Activated CD4-positive, alpha-beta T cell treated with anti-CD3 and anti-CD28 coated beads, Interleukin-2, amount 10 ng/mL, durations not matched to agents 7 days and 5 days (primary cell): ENCODE measurements at regions of chr1 and their contacts with region 1.

Region 1: GRCh38 chr1:155001675-155002463 is 733 bp upstream of the ZBTB7B start:
- DNase-seq: peak; percentile 99
- H3K4me3 Mint-ChIP-seq: peak overlapping the region; percentile 93
- H3K27ac Mint-ChIP-seq: peak overlapping the region; percentile 96
- H3K4me1 Mint-ChIP-seq: peaks cover 60% of the 10 kb centered on the region
- H3K27me3 Mint-ChIP-seq: no peaks in the 10 kb centered on the region

Region 2: DNA sequence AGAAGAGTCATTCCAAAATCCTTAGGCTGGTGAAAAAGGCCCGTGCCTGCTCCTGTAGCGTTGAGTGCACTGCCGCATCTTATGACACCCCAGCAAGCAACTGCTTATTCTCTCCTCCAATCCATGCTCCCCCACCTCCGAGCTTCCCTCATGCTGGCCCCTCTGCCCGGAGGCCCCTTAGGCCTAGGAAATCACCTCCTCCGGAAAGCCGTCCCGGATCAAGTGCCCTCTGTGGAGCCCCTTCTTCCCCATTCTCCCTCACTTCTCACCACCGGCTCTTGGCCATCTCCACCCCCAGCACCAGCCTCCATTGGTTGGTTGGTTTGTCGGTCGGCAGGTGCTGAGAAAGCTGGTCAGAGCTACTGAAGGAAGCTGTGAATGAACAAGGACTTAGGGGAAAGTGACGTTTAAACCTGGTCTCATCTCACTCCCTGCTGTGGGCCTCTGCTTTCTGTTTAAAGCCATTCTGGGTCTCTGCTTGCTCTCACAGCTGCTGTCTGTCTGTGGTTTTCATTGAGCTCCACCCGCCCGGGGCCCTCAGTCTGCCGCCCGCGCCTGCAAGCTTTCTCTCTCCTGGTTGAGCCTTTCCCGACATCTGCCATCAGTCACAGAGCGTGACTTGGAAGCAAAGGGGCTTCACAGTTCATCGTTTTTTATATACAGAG is 254.0 kb before region 1 on chr1:
- CTCF ChIA-PET with region 1: no interaction called
- POLR2A ChIA-PET with region 1: no interaction called
- DNase-seq: peak; percentile 76
- H3K4me3 Mint-ChIP-seq: peak overlapping the region; percentile 76
- H3K27ac Mint-ChIP-seq: peak overlapping the region; percentile 95
- H3K4me1 Mint-ChIP-seq: peaks cover 80% of the 10 kb centered on the region
- H3K27me3 Mint-ChIP-seq: peaks cover 6% of the 10 kb centered on the region

Region 3: GRCh38 chr1:154955718-154956543 is 45.9 kb before region 1 on chr1 and contains the start of gene PBXIP1:
- CTCF ChIA-PET with region 1: interaction called, 11 read pairs
- POLR2A ChIA-PET with region 1: interaction called, 5 read pairs
- DNase-seq: peak; percentile 91
- H3K4me3 Mint-ChIP-seq: peak within 1 kb of the TSS; percentile 96
- H3K27ac Mint-ChIP-seq: peak within 1 kb of the TSS; percentile 96
- H3K4me1 Mint-ChIP-seq: peaks cover 86% of the 10 kb centered on the region
- H3K27me3 Mint-ChIP-seq: no peaks in the 10 kb centered on the region
- total RNA-seq, gene PBXIP1: 74.6 to 92.0 TPM

Region 4: GRCh38 chr1:154974063-154974807 is 27.6 kb before region 1 on chr1 and contains the start of gene CKS1B:
- CTCF ChIA-PET with region 1: interaction called, 10 read pairs
- POLR2A ChIA-PET with region 1: no interaction called
- DNase-seq: peak; percentile 98
- H3K4me3 Mint-ChIP-seq: no peak within 1 kb of the TSS
- H3K27ac Mint-ChIP-seq: no peak within 1 kb of the TSS
- H3K4me1 Mint-ChIP-seq: peaks cover 40% of the 10 kb centered on the region
- H3K27me3 Mint-ChIP-seq: no peaks in the 10 kb centered on the region
- total RNA-seq, gene CKS1B: 147 to 157 TPM

Region 5: DNA sequence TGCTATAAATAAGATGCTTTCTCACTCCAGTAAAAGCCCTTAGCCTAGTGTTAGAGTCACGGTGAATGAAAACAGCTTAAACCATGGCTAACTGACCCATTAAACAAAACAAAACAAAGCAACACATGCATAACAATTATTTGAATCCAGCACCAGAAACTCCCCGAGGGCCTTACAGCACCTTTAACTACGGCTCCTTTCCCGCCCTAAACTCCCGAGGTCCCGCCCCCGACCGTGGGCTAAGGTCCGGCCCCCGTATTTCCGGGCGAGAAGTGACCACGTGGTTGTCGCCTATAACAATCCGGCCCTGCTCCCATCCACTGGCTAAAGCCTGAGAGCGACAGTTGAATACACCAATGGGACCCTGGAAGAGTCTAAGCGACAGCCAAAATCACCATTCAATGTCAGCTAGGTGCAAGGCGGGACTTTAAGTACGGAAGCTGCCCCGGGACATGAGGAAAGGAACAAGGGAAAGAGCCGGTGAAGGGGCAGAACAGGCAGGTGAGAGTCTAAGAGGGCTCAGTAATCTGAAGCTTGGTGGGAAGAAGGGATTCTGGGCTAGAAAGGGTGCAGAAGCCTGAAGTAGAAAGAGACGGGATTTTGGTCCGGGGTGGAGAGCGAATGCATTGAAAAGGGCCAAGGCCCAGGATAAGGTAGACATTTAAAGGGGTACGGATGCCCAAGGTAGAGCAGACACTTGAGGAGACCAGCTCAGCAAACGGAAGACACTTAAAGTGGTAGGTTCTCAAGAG is 18.8 kb before region 1 on chr1 and contains the start of gene FLAD1:
- CTCF ChIA-PET with region 1: interaction called, 29 read pairs
- POLR2A ChIA-PET with region 1: interaction called, 7 read pairs
- DNase-seq: peak; percentile 98
- H3K4me3 Mint-ChIP-seq: no peak within 1 kb of the TSS
- H3K27ac Mint-ChIP-seq: no peak within 1 kb of the TSS
- H3K4me1 Mint-ChIP-seq: peaks cover 33% of the 10 kb centered on the region
- H3K27me3 Mint-ChIP-seq: no peaks in the 10 kb centered on the region
- total RNA-seq, gene FLAD1: 41.2 to 41.3 TPM

Region 6: DNA sequence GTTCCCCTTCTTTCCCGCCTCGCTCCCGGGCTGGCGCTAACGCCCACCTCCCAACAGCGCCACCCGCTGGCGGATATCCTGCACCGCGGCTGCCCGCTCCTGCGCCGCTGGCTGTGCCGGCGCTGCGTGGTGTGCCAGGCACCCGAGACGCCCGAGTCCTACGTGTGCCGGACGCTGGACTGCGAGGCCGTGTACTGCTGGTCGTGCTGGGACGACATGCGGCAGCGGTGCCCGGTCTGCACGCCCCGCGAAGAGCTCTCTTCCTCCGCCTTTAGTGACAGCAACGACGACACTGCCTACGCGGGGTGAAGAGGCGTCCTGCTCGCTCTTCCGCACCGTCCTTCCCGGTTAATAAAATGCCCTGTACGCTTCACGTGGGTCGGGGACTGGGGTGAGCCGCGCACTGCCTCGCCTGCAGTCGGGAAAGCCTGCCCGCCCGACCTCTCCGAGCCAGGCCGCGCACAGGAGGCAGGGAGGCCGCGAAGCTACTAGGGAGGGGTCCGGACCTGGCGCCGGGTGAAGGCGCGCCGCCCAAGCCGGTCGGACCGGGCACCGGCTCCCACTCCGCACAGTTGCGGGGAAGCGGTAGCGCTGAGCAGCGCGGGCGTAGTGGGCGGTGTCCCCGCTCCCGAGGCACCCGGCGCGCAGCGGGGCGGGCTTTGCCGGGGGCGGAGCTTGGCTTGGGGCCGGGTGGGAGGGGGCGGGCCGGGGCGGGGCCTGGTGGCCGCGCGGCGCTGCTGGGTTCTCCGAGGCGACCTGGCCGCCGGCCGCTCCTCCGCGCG is 48.9 kb after region 1 on chr1 and contains the start of gene ADAM15:
- CTCF ChIA-PET with region 1: interaction called, 10 read pairs
- POLR2A ChIA-PET with region 1: interaction called, 5 read pairs
- DNase-seq: peak; percentile 81
- H3K4me3 Mint-ChIP-seq: peak within 1 kb of the TSS; percentile 82
- H3K27ac Mint-ChIP-seq: peak within 1 kb of the TSS; percentile 81
- H3K4me1 Mint-ChIP-seq: peaks cover 30% of the 10 kb centered on the region
- H3K27me3 Mint-ChIP-seq: no peaks in the 10 kb centered on the region
- total RNA-seq, gene ADAM15: 40.2 to 45.0 TPM